Mammary epithelial cell (primary cell): ENCODE measurements at regions of chr5 and their contacts with region 1.

Region 1: GRCh38 chr5:133610489-133611356 is 1.6 kb downstream of the FSTL4 start:
- DNase-seq: peak; percentile 47
- H3K4me3 ChIP-seq: no peak overlapping the region
- H3K27ac ChIP-seq: no peak overlapping the region
- H3K4me1 ChIP-seq: peaks cover 12% of the 10 kb centered on the region
- H3K27me3 ChIP-seq: peaks cover 43% of the 10 kb centered on the region
- CTCF ChIP-seq: peak; percentile 11 to 59

Region 2: DNA sequence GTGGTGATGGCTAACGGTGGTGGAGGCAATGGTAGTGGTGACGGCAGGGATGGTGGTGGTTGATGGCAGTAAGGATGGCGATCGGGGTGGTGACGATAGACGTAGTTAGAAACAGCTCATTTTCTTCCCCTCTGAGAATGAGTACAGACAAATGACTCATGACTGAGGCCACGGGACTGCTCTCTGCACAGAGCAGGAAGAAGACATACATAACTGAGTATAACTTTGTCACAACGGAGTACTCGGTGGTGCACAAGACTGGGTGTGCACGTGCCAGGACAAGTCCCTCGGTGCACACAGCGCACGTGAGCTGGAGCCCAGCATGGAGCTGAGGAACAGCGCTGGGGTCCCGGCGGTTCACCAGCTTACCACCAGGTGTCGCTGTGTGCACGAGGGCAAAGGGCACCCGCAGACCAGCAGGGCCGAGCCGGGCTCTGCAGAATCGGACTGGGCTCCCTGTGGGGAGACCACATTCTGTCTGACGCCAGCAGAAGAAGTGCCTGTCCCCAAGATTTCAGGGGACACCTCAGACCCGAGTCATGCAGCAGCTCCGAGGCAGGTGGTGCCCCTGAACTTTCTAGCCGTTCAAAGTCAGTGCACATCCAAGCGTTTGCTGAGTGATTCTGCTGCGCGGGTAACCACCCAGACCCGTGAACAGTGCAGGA is 187.0 kb before region 1 on chr5:
- CTCF ChIA-PET with region 1: no interaction called
- dilution Hi-C with region 1: no loop called
- in situ Hi-C with region 1: no loop called
- intact Hi-C with region 1: loop called (anchors 2 kb)
- DNase-seq: peak; percentile 69
- H3K4me3 ChIP-seq: no peak overlapping the region
- H3K27ac ChIP-seq: peak overlapping the region; percentile 11
- H3K4me1 ChIP-seq: peaks cover 21% of the 10 kb centered on the region
- H3K27me3 ChIP-seq: no peaks in the 10 kb centered on the region
- CTCF ChIP-seq: peak; percentile 72 to 75

Region 3: GRCh38 chr5:133489632-133490031 is 121.1 kb before region 1 on chr5:
- CTCF ChIA-PET with region 1: no interaction called
- dilution Hi-C with region 1: no loop called
- in situ Hi-C with region 1: no loop called
- intact Hi-C with region 1: loop called (anchors 5 kb)
- DNase-seq: peak; percentile 37
- H3K4me3 ChIP-seq: no peak overlapping the region
- H3K27ac ChIP-seq: no peak overlapping the region
- H3K4me1 ChIP-seq: no peaks in the 10 kb centered on the region
- H3K27me3 ChIP-seq: no peaks in the 10 kb centered on the region
- CTCF ChIP-seq: peak in 1 of 2 donors; percentile 52

Region 4: GRCh38 chr5:133552931-133553525 is 57.7 kb before region 1 on chr5:
- CTCF ChIA-PET with region 1: no interaction called
- dilution Hi-C with region 1: no loop called
- in situ Hi-C with region 1: no loop called
- intact Hi-C with region 1: loop called (anchors 1 kb)
- DNase-seq: peak; percentile 47
- H3K4me3 ChIP-seq: no peak overlapping the region
- H3K27ac ChIP-seq: no peak overlapping the region
- H3K4me1 ChIP-seq: no peaks in the 10 kb centered on the region
- H3K27me3 ChIP-seq: no peaks in the 10 kb centered on the region
- CTCF ChIP-seq: peak; percentile 77 to 81

Region 5: GRCh38 chr5:133565993-133566392 is 44.7 kb before region 1 on chr5:
- CTCF ChIA-PET with region 1: no interaction called
- dilution Hi-C with region 1: no loop called
- in situ Hi-C with region 1: no loop called
- intact Hi-C with region 1: loop called (anchors 2 kb)
- DNase-seq: peak; percentile 30
- H3K4me3 ChIP-seq: no peak overlapping the region
- H3K27ac ChIP-seq: no peak overlapping the region
- H3K4me1 ChIP-seq: no peaks in the 10 kb centered on the region
- H3K27me3 ChIP-seq: peaks cover 2% of the 10 kb centered on the region
- CTCF ChIP-seq: no peak

Region 6: GRCh38 chr5:133818031-133818431 is 207.3 kb after region 1 on chr5:
- CTCF ChIA-PET with region 1: no interaction called
- dilution Hi-C with region 1: no loop called
- in situ Hi-C with region 1: no loop called
- intact Hi-C with region 1: no loop called
- DNase-seq: peak; percentile 21
- H3K4me3 ChIP-seq: no peak overlapping the region
- H3K27ac ChIP-seq: no peak overlapping the region
- H3K4me1 ChIP-seq: peaks cover 7% of the 10 kb centered on the region
- H3K27me3 ChIP-seq: peaks cover 5% of the 10 kb centered on the region
- CTCF ChIP-seq: no peak